CD4-positive, alpha-beta T cell (primary cell): ENCODE measurements at regions of chr15 and their contacts with region 1.

Region 1: GRCh38 chr15:68053701-68054627 is at the start of gene PIAS1:
- DNase-seq: peak; percentile 87 to 97 (median 93)
- ATAC-seq: peak; percentile 90
- H3K4me3 ChIP-seq: peak within 1 kb of the TSS; percentile 94
- H3K4me3 Mint-ChIP-seq: peak within 1 kb of the TSS; percentile 98
- H3K27ac ChIP-seq: peak within 1 kb of the TSS; percentile 56 to 92
- H3K27ac Mint-ChIP-seq: peak within 1 kb of the TSS; percentile 86
- H3K4me1 ChIP-seq: peaks cover 16% of the 10 kb centered on the region
- H3K4me1 Mint-ChIP-seq: peaks cover 39% of the 10 kb centered on the region
- H3K27me3 ChIP-seq: no peaks in the 10 kb centered on the region
- H3K27me3 Mint-ChIP-seq: no peaks in the 10 kb centered on the region
- CTCF ChIP-seq: no peak
- total RNA-seq, gene PIAS1: 73.1 to 74.8 TPM

Region 2: GRCh38 chr15:67521029-67521811 is 532.7 kb before region 1 on chr15 and contains the start of gene C15orf61:
- CTCF ChIA-PET with region 1: no interaction called
- POLR2A ChIA-PET with region 1: interaction called, 4 read pairs
- intact Hi-C with region 1: loop called in 1 of 2 experiments (anchors 5 kb)
- DNase-seq: peak; percentile 70 to 95 (median 82)
- ATAC-seq: peak; percentile 80
- H3K4me3 ChIP-seq: peak within 1 kb of the TSS; percentile 78
- H3K4me3 Mint-ChIP-seq: peak within 1 kb of the TSS; percentile 95
- H3K27ac ChIP-seq: peak within 1 kb of the TSS; percentile 80 to 84
- H3K27ac Mint-ChIP-seq: peak within 1 kb of the TSS; percentile 91
- H3K4me1 ChIP-seq: peaks cover 13% of the 10 kb centered on the region
- H3K4me1 Mint-ChIP-seq: peaks cover 30% of the 10 kb centered on the region
- H3K27me3 ChIP-seq: no peaks in the 10 kb centered on the region
- H3K27me3 Mint-ChIP-seq: no peaks in the 10 kb centered on the region
- CTCF ChIP-seq: no peak
- total RNA-seq, gene C15orf61: 11.3 to 12.0 TPM

Region 3: GRCh38 chr15:68097029-68097428 is 43.1 kb after region 1 on chr15:
- CTCF ChIA-PET with region 1: no interaction called
- POLR2A ChIA-PET with region 1: no interaction called
- intact Hi-C with region 1: loop called in 1 of 2 experiments (anchors 5 kb)
- DNase-seq: no peak
- ATAC-seq: no peak
- H3K4me3 ChIP-seq: no peak overlapping the region
- H3K4me3 Mint-ChIP-seq: no peak overlapping the region
- H3K27ac ChIP-seq: no peak overlapping the region
- H3K27ac Mint-ChIP-seq: no peak overlapping the region
- H3K4me1 ChIP-seq: no peaks in the 10 kb centered on the region
- H3K4me1 Mint-ChIP-seq: peaks cover 67% of the 10 kb centered on the region
- H3K27me3 ChIP-seq: no peaks in the 10 kb centered on the region
- H3K27me3 Mint-ChIP-seq: no peaks in the 10 kb centered on the region
- CTCF ChIP-seq: no peak

Region 4: DNA sequence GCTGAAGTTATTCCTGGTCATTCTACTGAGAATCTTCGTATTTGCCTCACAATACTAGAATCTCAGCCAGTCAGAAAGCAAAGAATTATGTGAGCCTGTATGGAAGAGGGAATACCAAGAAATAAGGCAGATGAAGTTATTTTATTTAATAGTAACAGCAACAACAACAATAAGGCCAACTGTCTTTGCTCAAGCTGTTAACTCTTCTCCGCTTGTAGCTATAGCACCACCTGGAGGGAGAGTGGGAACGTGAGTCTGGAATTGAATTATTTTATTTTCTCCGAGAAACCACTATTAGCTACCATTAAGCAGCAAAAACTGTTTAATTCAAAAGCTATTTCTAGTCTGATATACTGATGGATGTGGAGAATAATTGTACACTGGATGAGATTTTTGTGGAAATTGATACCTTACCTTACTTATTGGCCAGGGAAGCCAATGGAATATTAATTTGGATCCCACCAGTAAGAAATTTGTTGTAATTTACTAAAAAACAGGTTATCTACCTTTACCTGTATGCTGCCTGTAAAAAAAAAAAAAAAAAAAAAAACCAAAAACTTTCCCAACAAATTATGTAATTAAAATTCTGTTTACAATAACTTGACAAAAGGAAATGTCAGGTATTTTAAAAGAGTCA is 101.1 kb after region 1 on chr15:
- CTCF ChIA-PET with region 1: interaction called, 4 read pairs
- POLR2A ChIA-PET with region 1: interaction called, 6 read pairs
- intact Hi-C with region 1: loop called in 1 of 2 experiments (anchors 5 kb)
- DNase-seq: peak in 7 of 14 experiments; percentile 3 to 51 (median 28)
- ATAC-seq: peak; percentile 37
- H3K4me3 ChIP-seq: no peak overlapping the region
- H3K4me3 Mint-ChIP-seq: no peak overlapping the region
- H3K27ac ChIP-seq: no peak overlapping the region
- H3K27ac Mint-ChIP-seq: no peak overlapping the region
- H3K4me1 ChIP-seq: no peaks in the 10 kb centered on the region
- H3K4me1 Mint-ChIP-seq: peaks cover 4% of the 10 kb centered on the region
- H3K27me3 ChIP-seq: no peaks in the 10 kb centered on the region
- H3K27me3 Mint-ChIP-seq: no peaks in the 10 kb centered on the region
- CTCF ChIP-seq: peak; percentile 45